ENCODE measurements at regions of chr16 and their contacts with region 1.

Region 1: GRCh38 chr16:68590201-68590994 is 51.3 kb downstream of the ZFP90 start:
- DNase-seq: peak; percentile 69
- ATAC-seq: peak; percentile 86
- H3K4me3 Mint-ChIP-seq: no peak overlapping the region
- H3K27ac Mint-ChIP-seq: no peak overlapping the region
- H3K4me1 Mint-ChIP-seq: peaks cover 2% of the 10 kb centered on the region
- H3K27me3 Mint-ChIP-seq: no peaks in the 10 kb centered on the region

Region 2: GRCh38 chr16:68417711-68418301 is 172.6 kb before region 1 on chr16:
- CTCF ChIA-PET with region 1: no interaction called
- POLR2A ChIA-PET with region 1: no interaction called
- DNase-seq: peak; percentile 87
- ATAC-seq: peak; percentile 97
- H3K4me3 Mint-ChIP-seq: peak overlapping the region; percentile 76
- H3K27ac Mint-ChIP-seq: peak overlapping the region; percentile 90
- H3K4me1 Mint-ChIP-seq: peaks cover 36% of the 10 kb centered on the region
- H3K27me3 Mint-ChIP-seq: no peaks in the 10 kb centered on the region

Region 3: GRCh38 chr16:68520649-68521086 is 69.7 kb before region 1 on chr16:
- CTCF ChIA-PET with region 1: interaction called, 10 read pairs
- POLR2A ChIA-PET with region 1: interaction called, 3 read pairs
- DNase-seq: peak; percentile 93
- ATAC-seq: peak; percentile 95
- H3K4me3 Mint-ChIP-seq: peak overlapping the region; percentile 18
- H3K27ac Mint-ChIP-seq: peak overlapping the region; percentile 34
- H3K4me1 Mint-ChIP-seq: peaks cover 8% of the 10 kb centered on the region
- H3K27me3 Mint-ChIP-seq: no peaks in the 10 kb centered on the region

Region 4: DNA sequence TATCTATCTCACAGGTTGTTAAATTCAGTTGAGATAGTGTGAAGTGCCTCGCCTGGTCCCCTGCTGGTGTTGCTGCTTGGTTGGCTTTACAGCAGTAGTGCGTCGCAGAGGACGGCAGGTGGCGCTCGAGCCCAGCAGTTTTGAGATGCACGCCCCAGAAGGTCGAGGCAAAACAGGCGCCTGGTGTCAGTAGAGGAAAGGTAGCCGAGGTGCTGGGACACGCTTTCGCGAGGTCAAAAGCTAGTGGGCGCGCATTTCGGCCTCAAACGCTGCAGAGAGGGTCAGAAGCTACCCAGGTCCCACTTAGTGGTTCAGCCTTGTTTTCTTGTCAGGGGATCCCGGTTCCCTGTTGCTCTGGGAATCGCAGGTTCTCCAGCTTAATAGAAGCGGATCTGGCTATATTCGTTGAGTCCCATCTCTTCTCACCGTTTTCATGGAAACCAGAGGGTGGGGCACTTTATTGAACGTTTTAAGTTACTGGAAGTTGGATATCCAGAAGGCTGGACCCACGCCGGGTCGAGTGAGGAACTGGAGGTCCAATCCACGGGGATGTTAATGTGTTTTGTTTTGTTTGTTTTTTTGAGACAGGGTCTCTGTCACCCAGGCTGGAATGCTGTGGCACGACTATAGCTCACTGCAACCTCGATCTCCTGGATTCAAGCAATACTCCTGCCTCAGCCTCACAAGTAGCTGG is 61.6 kb before region 1 on chr16:
- CTCF ChIA-PET with region 1: interaction called, 90 read pairs
- POLR2A ChIA-PET with region 1: interaction called, 3 read pairs
- DNase-seq: peak; percentile 93
- ATAC-seq: peak; percentile 80
- H3K4me3 Mint-ChIP-seq: peak overlapping the region; percentile 82
- H3K27ac Mint-ChIP-seq: no peak overlapping the region
- H3K4me1 Mint-ChIP-seq: peaks cover 21% of the 10 kb centered on the region
- H3K27me3 Mint-ChIP-seq: no peaks in the 10 kb centered on the region

Region 5: DNA sequence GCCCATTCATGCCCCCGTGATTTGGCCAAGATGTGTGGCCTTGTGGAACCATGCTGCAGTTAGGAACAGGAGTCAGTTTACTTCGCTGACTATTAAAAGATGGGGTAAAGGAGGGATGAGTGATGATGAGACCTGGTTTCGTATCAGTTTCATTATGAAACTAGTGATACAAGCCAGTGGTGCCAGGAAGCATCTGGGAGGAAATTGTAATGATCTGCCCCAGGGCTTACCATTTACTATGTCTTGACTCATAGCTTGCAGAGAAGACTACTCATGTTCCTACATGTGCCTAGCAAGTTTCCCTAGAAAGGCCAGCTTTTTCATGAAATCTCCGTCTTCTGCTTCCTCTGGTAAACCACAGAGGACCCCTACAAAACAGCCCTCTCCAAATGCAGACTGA is 77.9 kb after region 1 on chr16:
- CTCF ChIA-PET with region 1: interaction called, 10 read pairs
- POLR2A ChIA-PET with region 1: no interaction called
- DNase-seq: peak; percentile 36
- ATAC-seq: peak; percentile 75
- H3K4me3 Mint-ChIP-seq: no peak overlapping the region
- H3K27ac Mint-ChIP-seq: peak overlapping the region; percentile 33
- H3K4me1 Mint-ChIP-seq: peaks cover 16% of the 10 kb centered on the region
- H3K27me3 Mint-ChIP-seq: peaks cover 4% of the 10 kb centered on the region

Region 6: DNA sequence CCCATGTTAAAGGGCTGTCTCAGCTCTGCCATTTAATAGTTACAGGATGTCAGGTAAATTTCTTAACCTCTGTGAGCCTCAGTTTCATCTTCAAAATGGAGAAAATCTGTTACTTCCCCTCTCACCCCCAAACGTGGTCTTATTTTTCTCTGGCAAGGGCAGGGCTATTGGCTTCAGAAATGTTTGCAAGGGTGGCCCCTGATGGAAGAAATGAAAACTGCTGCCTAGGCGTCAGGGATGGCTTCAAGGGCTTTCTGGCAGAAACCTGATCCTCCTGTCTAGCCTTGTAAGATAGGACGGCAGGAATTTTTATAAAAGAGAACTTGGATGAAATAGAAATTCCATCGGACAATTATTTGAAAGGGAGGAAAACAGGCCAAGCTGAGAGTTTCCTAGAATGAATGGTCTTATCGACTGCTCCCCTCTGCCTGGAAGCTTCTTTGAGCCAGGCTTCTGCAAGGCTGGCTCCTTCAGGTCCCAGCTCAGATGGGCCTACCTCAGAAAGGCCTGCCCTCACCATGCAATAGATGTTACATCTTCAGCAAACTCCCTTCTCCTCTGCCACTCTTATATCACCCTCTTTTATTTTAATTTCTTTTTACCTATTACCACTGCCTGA is 210.0 kb after region 1 on chr16:
- CTCF ChIA-PET with region 1: interaction called, 13 read pairs
- POLR2A ChIA-PET with region 1: no interaction called
- DNase-seq: peak; percentile 43
- ATAC-seq: peak; percentile 44
- H3K4me3 Mint-ChIP-seq: no peak overlapping the region
- H3K27ac Mint-ChIP-seq: no peak overlapping the region
- H3K4me1 Mint-ChIP-seq: no peaks in the 10 kb centered on the region
- H3K27me3 Mint-ChIP-seq: peaks cover 2% of the 10 kb centered on the region